HepG2 (cell line): ENCODE measurements at regions of chr12 and their contacts with region 1.

Region 1: DNA sequence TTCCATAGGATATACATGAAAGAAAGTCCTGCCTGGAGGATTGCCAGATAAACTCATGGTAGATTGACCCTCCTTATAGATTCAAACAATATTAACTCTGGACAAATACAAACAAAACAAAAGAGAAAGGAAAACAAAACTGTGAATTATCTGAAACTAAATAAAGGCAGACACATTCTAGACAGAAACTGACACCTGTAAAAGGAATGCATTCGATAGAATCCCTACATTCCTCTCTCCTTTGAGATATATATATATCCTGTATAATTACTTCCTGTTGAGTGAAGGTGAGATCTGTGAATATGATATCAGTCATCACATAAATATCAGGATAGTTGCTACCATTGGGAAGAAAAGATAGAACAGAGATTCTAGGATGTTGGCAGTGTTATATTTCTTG is 948.4 kb upstream of the ATXN7L3B start:
- DNase-seq: no peak
- ATAC-seq: no peak
- H3K4me3 ChIP-seq: no peak overlapping the region
- H3K27ac ChIP-seq: no peak overlapping the region
- H3K4me1 ChIP-seq: no peaks in the 10 kb centered on the region
- H3K27me3 ChIP-seq: no peaks in the 10 kb centered on the region
- CTCF ChIP-seq: no peak
- EP300 ChIP-seq: no peak
- POLR2A ChIP-seq: no peak
- RAD21 ChIP-seq: no peak

Region 2: DNA sequence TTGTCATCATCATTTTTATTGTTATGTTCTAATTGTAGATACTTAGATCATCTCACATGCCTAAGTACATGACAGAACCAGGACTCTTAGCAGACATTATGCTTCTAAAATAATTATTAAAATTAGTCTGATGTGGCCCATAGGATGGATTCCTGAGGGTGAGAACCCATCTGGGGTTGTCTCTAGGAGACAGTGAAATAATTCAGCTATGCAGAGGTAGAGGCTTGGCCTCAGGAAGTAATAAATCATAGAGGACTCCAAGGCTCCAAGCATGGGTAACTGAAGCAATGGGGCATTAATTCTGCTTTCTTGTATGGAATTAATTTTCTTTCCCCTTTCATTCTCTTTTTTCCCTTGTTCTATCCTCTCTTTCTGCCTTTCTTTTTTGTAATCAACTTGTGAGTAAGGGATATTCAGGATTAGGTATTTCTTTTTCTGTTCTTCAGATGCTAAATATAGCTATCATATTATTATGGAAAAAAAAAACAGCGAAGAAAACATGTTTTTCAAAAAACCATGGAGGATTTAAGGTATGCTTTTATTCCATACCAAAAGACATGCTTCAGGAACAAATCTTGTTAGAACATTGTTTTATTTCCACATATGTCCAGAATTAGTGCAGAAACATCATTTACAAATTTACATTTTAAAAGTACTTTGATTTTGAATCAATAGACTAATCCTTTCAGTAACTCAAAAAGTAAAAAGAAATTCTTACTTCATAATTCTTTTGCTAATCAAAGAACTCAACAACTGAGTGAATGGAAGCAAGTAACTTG is 1053.8 kb before region 1 on chr12:
- CTCF ChIA-PET with region 1: no interaction called
- POLR2A ChIA-PET with region 1: no interaction called
- in situ Hi-C with region 1: no loop called
- intact Hi-C with region 1: no loop called
- DNase-seq: no peak
- ATAC-seq: no peak
- H3K4me3 ChIP-seq: no peak overlapping the region
- H3K27ac ChIP-seq: no peak overlapping the region
- H3K4me1 ChIP-seq: no peaks in the 10 kb centered on the region
- H3K27me3 ChIP-seq: no peaks in the 10 kb centered on the region
- CTCF ChIP-seq: no peak
- EP300 ChIP-seq: no peak
- POLR2A ChIP-seq: no peak
- RAD21 ChIP-seq: no peak

Region 3: DNA sequence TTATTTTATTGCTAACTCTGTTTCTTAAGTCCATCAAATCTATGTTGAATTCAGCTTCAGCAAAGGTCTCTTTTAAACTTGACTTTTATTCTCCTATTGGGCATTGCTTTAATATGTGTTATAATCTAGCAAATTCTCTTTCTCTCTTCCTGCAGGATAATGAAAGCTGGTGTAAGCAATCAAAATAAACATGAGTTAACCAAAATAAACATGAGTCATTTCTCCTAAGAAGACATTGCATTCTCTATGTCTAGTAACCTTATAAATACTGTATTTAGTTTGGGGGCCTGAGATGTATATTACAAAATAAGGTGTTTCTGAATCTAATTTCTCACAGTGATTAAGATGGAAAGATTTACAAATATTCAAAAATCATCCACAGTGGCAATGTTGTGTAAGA is 209.3 kb after region 1 on chr12:
- CTCF ChIA-PET with region 1: no interaction called
- POLR2A ChIA-PET with region 1: no interaction called
- in situ Hi-C with region 1: no loop called
- intact Hi-C with region 1: loop called (anchors 5 kb)
- DNase-seq: no peak
- ATAC-seq: no peak
- H3K4me3 ChIP-seq: no peak overlapping the region
- H3K27ac ChIP-seq: no peak overlapping the region
- H3K4me1 ChIP-seq: no peaks in the 10 kb centered on the region
- H3K27me3 ChIP-seq: no peaks in the 10 kb centered on the region
- CTCF ChIP-seq: no peak
- EP300 ChIP-seq: no peak
- POLR2A ChIP-seq: no peak
- RAD21 ChIP-seq: no peak